WTC11 (cell line): ENCODE measurements at regions of chr3 and their contacts with region 1.

Region 1: GRCh38 chr3:108153451-108153981 is 62.7 kb upstream of the CD47 start:
- DNase-seq: peak; percentile 61
- ATAC-seq: peak; percentile 91
- H3K4me3 Mint-ChIP-seq: no peak overlapping the region
- H3K27ac Mint-ChIP-seq: no peak overlapping the region
- H3K4me1 Mint-ChIP-seq: peaks cover 5% of the 10 kb centered on the region
- H3K27me3 Mint-ChIP-seq: no peaks in the 10 kb centered on the region
- CTCF ChIP-seq: peak; percentile 51; the same call in 1 of the 2 replicates

Region 2: DNA sequence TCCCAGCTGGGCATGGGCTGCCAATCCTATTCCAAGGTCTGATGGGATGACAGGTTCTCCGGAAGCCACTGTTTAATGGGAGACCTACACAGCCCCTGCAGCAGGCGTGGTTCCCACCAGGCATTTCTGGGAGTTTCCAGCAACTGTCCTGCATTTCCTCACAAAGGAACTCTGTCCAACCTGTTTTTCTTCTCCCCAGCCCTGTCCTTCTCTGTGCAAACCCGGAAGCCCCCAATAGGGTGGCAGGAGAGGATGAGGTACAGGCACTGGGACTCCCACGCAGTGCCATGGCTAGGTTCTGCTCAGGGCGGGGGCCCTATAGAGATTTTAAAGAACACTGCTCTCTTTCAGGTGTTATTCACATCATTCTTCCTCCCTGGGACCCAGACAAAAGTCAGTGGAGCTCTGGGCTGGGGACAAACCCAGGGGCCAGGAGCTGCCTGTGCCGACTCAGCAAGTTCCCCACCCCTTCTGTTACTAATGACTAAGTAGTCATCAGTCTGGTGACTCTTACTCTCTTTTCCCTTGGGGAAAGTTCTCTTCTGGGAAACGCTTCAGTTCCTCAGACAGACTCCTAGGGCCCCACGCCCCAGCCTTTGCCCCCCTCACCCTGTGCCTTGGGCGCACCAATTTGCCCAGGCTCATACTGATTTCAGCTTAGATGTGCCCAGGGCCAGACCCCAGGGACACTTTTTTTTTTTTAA is 160.4 kb before region 1 on chr3:
- CTCF ChIA-PET with region 1: no interaction called
- POLR2A ChIA-PET with region 1: no interaction called
- DNase-seq: no peak
- ATAC-seq: peak; percentile 44
- H3K4me3 Mint-ChIP-seq: no peak overlapping the region
- H3K27ac Mint-ChIP-seq: no peak overlapping the region
- H3K4me1 Mint-ChIP-seq: peaks cover 7% of the 10 kb centered on the region
- H3K27me3 Mint-ChIP-seq: no peaks in the 10 kb centered on the region
- CTCF ChIP-seq: no peak

Region 3: DNA sequence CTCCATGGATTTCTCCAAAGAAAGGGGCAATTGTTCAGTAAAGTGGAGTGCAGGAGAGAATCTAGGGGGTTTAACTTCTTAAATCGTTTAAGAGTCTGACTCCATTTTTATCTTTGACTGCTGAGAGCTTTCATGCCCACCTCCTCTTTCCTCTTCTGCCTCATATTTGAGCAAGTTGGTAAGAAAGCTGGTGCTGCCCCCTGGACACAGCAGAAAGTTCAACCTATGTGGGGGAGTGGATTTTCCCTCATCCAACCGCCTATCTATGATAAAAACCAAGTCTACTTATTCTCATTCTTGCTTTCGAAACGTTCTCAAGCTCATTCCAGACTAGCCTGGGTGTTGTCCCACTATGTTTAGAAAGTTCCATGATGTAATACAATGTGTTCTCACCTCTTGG is 168.8 kb after region 1 on chr3:
- CTCF ChIA-PET with region 1: interaction called, 12 read pairs
- POLR2A ChIA-PET with region 1: no interaction called
- DNase-seq: no peak
- ATAC-seq: peak; percentile 50; the same call in 1 of the 2 replicates
- H3K4me3 Mint-ChIP-seq: no peak overlapping the region
- H3K27ac Mint-ChIP-seq: no peak overlapping the region
- H3K4me1 Mint-ChIP-seq: peaks cover 19% of the 10 kb centered on the region
- H3K27me3 Mint-ChIP-seq: no peaks in the 10 kb centered on the region
- CTCF ChIP-seq: no peak

Region 4: DNA sequence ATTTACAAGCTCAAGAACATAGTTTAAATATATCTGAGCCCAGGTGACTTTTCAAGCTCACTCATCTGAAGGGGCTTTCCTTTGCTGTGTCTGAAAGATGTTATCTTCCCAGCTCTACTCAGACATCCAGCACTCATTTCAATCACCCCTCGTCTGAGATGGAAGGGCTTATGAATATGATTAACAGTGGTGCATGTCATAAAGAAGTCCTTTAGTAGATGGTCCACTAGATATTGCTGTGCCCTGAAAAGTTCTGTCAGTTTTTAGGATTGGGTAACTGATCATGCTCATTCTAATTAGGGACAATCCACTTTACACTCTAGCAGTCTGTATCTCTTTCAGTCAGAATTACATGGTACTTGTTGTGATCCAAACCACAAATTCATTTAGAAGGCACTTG is 575.4 kb after region 1 on chr3:
- CTCF ChIA-PET with region 1: no interaction called
- POLR2A ChIA-PET with region 1: no interaction called
- DNase-seq: no peak
- ATAC-seq: no peak
- H3K4me3 Mint-ChIP-seq: no peak overlapping the region
- H3K27ac Mint-ChIP-seq: no peak overlapping the region
- H3K4me1 Mint-ChIP-seq: peaks cover 9% of the 10 kb centered on the region
- H3K27me3 Mint-ChIP-seq: no peaks in the 10 kb centered on the region; the same call in 1 of the 2 replicates
- CTCF ChIP-seq: no peak